ENCODE measurements at regions of chr9 and their contacts with region 1.

Region 1: GRCh38 chr9:113275157-113276131 is at the starts of genes CDC26 and PRPF4:
- DNase-seq: peak; percentile 100
- H3K4me3 ChIP-seq: peak within 1 kb of the TSS; percentile 68 to 90 (median 82)
- H3K27ac ChIP-seq: peak within 1 kb of the TSS; percentile 93 to 98 (median 94)
- H3K4me1 ChIP-seq: peaks cover 30 to 43% (median 33%) of the 10 kb centered on the region in 4 donors
- H3K27me3 ChIP-seq: no peaks in the 10 kb centered on the region
- CTCF ChIP-seq: peak in 1 of 3 experiments; percentile 4
- EP300 ChIP-seq: no peak
- POLR2A ChIP-seq: peak; percentile 86
- total RNA-seq, gene CDC26: 41.5 to 77.2 (median 48.5) TPM
- total RNA-seq, gene PRPF4: 12.0 to 18.1 (median 16.3) TPM

Region 2: DNA sequence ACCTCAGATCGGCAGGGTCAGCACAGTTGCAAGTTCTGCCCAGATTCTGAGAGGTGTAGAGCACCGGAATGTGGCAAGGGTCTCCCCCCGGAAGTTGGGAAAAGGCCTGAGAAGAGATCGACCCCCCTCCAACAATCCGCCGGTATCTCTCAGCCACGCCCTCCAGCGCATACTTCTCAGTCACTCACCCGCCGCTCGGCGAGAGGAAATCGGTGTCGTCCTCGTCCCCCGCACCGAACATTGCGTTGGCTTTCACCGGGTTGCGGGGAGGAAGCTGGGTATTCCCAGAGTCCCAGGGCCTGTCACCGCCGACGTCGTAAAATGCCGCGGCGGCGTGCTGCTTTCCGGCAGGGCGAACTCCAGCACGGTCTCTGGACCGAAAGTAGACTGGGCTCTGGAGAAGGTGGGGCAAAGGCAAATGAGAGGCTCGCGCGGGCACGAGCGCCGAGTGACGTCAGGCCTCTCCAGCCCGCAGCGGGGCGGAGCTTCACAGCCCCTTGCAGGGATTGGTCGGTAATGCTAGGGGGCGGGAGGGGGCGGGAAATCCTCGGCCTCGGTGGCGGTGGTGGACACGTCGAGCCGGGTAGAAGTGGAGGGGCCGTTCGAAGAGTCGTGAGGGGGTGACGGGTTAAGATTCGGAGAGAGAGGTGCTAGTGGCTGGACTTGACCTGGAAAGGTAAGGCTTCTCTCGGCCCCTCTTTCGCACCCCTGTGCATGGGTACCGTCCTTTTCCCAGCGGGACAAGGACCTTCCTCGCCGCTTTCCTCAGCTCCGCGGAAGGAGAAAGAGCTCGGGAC is 54.2 kb before region 1 on chr9 and contains the starts of genes FKBP15 and SLC31A1:
- intact Hi-C with region 1: loop called (anchors 5 kb)
- DNase-seq: peak; percentile 100
- H3K4me3 ChIP-seq: peak within 1 kb of the TSS; percentile 65 to 89 (median 86)
- H3K27ac ChIP-seq: peak within 1 kb of the TSS; percentile 88 to 93 (median 91)
- H3K4me1 ChIP-seq: peaks cover 29 to 55% (median 45%) of the 10 kb centered on the region in 4 donors
- H3K27me3 ChIP-seq: no peaks in the 10 kb centered on the region
- CTCF ChIP-seq: peak in 1 of 3 experiments; percentile 20
- EP300 ChIP-seq: no peak
- POLR2A ChIP-seq: peak; percentile 45
- total RNA-seq, gene FKBP15: 18.1 to 23.0 (median 20.6) TPM
- total RNA-seq, gene SLC31A1: 8.3 to 10.8 (median 8.9) TPM

Region 3: DNA sequence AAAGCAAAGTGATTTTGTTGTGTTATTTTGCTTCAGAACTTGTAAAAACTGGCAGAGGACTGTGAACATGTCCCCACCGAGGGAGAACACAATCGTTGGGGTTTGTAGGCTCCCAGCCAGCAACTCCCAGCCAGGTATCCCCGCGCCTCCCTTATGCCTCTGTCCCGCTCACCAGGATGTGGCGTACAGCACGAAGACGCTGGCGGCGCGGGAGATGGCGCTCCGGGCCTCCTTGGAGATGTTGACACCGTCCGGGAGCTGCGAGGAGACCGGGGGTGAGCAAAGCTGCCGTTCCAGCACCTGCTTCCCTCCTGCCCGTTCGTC is 134.4 kb after region 1 on chr9:
- intact Hi-C with region 1: loop called (anchors 5 kb)
- DNase-seq: no peak
- H3K4me3 ChIP-seq: peak overlapping the region; percentile 71 to 88 (median 82)
- H3K27ac ChIP-seq: peak overlapping the region; percentile 90 to 97 (median 96)
- H3K4me1 ChIP-seq: peaks cover 14 to 31% (median 25%) of the 10 kb centered on the region in 4 donors
- H3K27me3 ChIP-seq: no peaks in the 10 kb centered on the region
- CTCF ChIP-seq: no peak
- EP300 ChIP-seq: no peak
- POLR2A ChIP-seq: no peak

Measured in esophagus muscularis mucosa (tissue), 4 donors.